Activated naive CD4-positive, alpha-beta T cell treated with anti-CD3 and anti-CD28 coated beads, Interleukin-2, amount 10 ng/mL, durations not matched to agents 7 days and 5 days (primary cell): ENCODE measurements at regions of chr4 and their contacts with region 1.

Region 1: GRCh38 chr4:77465271-77465670 is 140.3 kb upstream of the CXCL13 start:
- DNase-seq: no peak
- H3K4me3 Mint-ChIP-seq: no peak overlapping the region
- H3K27ac Mint-ChIP-seq: no peak overlapping the region
- H3K4me1 Mint-ChIP-seq: no peaks in the 10 kb centered on the region
- H3K27me3 Mint-ChIP-seq: no peaks in the 10 kb centered on the region

Region 2: DNA sequence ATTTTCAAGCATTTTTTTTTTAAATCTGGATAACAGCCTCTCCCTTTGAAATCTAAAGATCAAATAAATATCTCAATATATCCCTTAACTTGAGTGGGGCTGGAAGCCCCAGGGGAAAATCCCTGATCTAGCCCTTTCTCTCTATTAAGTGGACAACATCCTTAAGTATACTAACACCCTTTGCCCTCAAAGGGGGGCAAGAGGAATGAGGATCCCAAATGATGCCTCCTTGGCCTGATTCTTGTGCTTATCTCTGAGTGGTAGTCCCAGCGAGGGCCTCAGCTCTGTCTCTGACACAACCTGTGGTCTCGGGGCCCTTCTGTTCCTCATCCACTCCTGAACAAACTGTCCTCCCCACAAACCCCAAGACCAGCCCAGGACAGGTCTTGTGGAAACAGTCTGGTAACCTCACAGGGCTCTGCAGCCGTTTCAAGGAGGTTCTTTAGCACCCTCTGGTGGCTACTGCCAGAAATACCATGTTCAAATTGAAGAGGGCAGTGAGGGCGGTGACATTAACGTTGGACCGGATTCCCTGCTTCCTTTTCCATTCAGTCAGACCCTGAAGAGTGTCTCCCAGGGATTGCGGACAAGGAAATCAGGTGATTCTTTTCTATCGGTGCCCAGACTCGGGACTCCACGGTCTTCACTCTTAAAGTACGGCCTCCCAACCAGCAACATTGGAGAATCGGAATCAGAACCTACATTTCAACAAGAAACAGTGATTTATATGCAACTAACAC is 153.3 kb after region 1 on chr4:
- CTCF ChIA-PET with region 1: interaction called, 100 read pairs
- DNase-seq: peak; percentile 67
- H3K4me3 Mint-ChIP-seq: no peak overlapping the region
- H3K27ac Mint-ChIP-seq: no peak overlapping the region
- H3K4me1 Mint-ChIP-seq: peaks cover 2% of the 10 kb centered on the region
- H3K27me3 Mint-ChIP-seq: peaks cover 6% of the 10 kb centered on the region

Region 3: DNA sequence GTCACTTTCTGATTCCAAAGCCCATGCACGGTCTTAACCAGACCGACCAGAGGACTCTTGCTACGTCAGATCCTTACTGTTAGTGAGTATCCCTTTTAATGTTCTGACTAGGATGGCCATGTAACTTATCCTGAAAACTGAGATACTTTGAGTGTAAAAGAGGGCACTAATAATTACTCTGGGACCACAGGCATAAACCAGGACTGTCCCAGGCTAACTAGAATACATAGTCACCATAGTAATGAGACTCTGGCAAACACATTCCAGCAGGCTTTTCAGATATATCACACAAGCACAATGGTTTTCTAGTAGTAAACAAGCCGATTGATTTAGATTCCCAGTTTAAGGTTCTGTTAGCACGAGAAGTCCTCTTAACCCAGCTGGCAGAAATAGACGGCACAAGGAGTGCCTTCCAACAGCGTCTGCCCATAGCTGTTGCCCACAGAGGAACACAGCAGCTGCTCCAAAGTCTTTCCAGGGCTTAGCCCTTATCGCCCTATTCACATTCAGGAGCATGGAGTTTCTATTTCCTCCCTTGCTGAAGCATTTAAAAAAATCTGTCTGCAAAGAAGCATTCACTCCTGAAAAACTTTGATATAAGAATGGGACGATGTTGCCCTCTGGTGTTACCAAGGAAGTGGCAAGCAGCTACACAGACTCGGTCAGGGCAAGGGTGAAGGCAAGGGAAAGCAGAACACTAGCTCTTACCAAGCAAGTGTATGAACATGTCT is 232.8 kb after region 1 on chr4:
- CTCF ChIA-PET with region 1: interaction called, 12 read pairs
- DNase-seq: no peak
- H3K4me3 Mint-ChIP-seq: no peak overlapping the region
- H3K27ac Mint-ChIP-seq: no peak overlapping the region
- H3K4me1 Mint-ChIP-seq: no peaks in the 10 kb centered on the region
- H3K27me3 Mint-ChIP-seq: peaks cover 28% of the 10 kb centered on the region